OCI-LY7 (cell line): ENCODE measurements at regions of chr3 and their contacts with region 1.

Region 1: GRCh38 chr3:53375019-53375418 is 27.7 kb upstream of the DCP1A start:
- DNase-seq: peak; percentile 61
- H3K4me3 ChIP-seq: no peak overlapping the region
- H3K27ac ChIP-seq: no peak overlapping the region
- H3K4me1 ChIP-seq: no peaks in the 10 kb centered on the region
- CTCF ChIP-seq: peak; percentile 90

Region 2: GRCh38 chr3:53513556-53514190 is 138.7 kb after region 1 on chr3:
- CTCF ChIA-PET with region 1: no interaction called
- POLR2A ChIA-PET with region 1: no interaction called
- intact Hi-C with region 1: loop called (anchors 10 kb)
- DNase-seq: no peak
- H3K4me3 ChIP-seq: no peak overlapping the region
- H3K27ac ChIP-seq: no peak overlapping the region
- H3K4me1 ChIP-seq: no peaks in the 10 kb centered on the region
- CTCF ChIP-seq: peak; percentile 69

Region 3: GRCh38 chr3:53709860-53710674 is 335.0 kb after region 1 on chr3:
- CTCF ChIA-PET with region 1: no interaction called
- POLR2A ChIA-PET with region 1: no interaction called
- intact Hi-C with region 1: loop called (anchors 2 kb)
- DNase-seq: peak; percentile 59
- H3K4me3 ChIP-seq: no peak overlapping the region
- H3K27ac ChIP-seq: no peak overlapping the region
- H3K4me1 ChIP-seq: no peaks in the 10 kb centered on the region
- CTCF ChIP-seq: peak; percentile 85

Region 4: DNA sequence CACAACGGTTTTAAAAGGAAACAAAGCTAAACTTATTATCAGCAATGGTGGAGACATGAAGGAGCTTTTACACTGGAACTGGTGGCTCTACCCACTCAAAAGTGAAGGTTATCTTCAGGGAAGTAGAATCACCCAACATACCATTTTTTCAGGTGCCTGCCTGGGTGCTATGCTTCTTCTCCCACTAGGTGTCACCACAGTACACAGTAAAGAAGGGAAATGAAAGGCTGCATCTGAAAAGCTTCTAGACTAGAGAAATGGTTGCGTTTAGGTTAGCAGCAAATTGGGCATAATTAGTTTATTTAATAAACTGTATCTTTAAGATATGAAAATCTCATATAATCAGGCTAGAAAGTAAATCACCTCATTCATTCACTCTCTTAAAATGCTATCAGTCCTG is 563.6 kb after region 1 on chr3:
- CTCF ChIA-PET with region 1: no interaction called
- POLR2A ChIA-PET with region 1: no interaction called
- intact Hi-C with region 1: loop called (anchors 10 kb)
- DNase-seq: peak; percentile 54
- H3K4me3 ChIP-seq: no peak overlapping the region
- H3K27ac ChIP-seq: no peak overlapping the region
- H3K4me1 ChIP-seq: no peaks in the 10 kb centered on the region
- CTCF ChIP-seq: peak; percentile 91